H1 (cell line): ENCODE measurements at regions of chr2 and their contacts with region 1.

Region 1: GRCh38 chr2:130842770-130843169 is 6.1 kb downstream of the ARHGEF4 start:
- DNase-seq: no peak
- H3K4me3 ChIP-seq: no peak overlapping the region
- H3K27ac ChIP-seq: no peak overlapping the region
- H3K4me1 ChIP-seq: peaks cover 0 to 11% (median 4%) of the 10 kb centered on the region in 4 experiments; a peak in 6 of 7 replicates
- H3K27me3 ChIP-seq: peaks cover 3 to 5% (median 4%) of the 10 kb centered on the region in 4 experiments; a peak in 6 of 7 replicates
- CTCF ChIP-seq: peak in 2 of 3 experiments; percentile 40 to 44; a peak in 2 of 4 replicates
- EP300 ChIP-seq: no peak
- POLR2A ChIP-seq: no peak
- RAD21 ChIP-seq: peak; percentile 19 to 46; a peak in 2 of 4 replicates

Region 2: GRCh38 chr2:130768191-130768855 is 74.4 kb before region 1 on chr2:
- CTCF ChIA-PET with region 1: no interaction called
- POLR2A ChIA-PET with region 1: no interaction called
- DNase-seq: no peak
- H3K4me3 ChIP-seq: no peak overlapping the region
- H3K27ac ChIP-seq: no peak overlapping the region
- H3K4me1 ChIP-seq: no peaks in the 10 kb centered on the region
- H3K27me3 ChIP-seq: no peaks in the 10 kb centered on the region
- CTCF ChIP-seq: peak; percentile 46 to 56 (median 50)
- EP300 ChIP-seq: no peak
- POLR2A ChIP-seq: no peak
- RAD21 ChIP-seq: peak; percentile 34 to 45

Region 3: DNA sequence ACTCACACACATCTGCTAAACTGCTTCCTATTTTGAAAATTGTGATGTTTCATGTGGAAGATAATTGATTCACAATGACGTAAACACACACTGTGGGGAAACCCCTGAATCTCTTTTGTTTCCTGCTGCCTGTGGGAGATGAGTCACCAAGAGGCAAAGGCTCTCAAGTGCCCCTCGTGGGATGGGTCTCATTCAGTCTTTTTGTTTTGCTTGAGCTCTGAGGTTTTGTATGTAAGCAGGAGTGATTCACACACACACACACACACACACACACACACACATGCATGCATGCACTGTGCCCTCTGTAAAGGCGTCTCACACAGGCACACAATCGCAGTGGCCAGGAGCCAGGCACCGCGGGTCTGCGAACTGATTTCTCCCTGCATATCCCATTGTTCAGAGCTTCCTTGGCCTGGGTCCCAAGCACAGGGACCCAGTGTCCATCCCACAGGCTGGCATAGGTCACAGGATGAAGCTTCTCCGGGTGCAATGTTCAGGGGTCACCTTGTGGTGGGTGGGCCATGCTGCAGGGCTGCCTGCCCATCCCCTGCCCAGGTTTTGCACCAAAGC is 18.2 kb before region 1 on chr2:
- CTCF ChIA-PET with region 1: interaction called, 13 read pairs
- POLR2A ChIA-PET with region 1: interaction called, 3 read pairs
- DNase-seq: peak in 1 of 2 experiments; percentile 41
- H3K4me3 ChIP-seq: no peak overlapping the region
- H3K27ac ChIP-seq: no peak overlapping the region
- H3K4me1 ChIP-seq: peaks cover 0 to 35% (median 13%) of the 10 kb centered on the region in 4 experiments; a peak in 6 of 7 replicates
- H3K27me3 ChIP-seq: no peaks in the 10 kb centered on the region
- CTCF ChIP-seq: peak in 1 of 3 experiments; percentile 3; a peak in 1 of 4 replicates
- EP300 ChIP-seq: no peak
- POLR2A ChIP-seq: no peak
- RAD21 ChIP-seq: no peak